ENCODE measurements at regions of chr5 and their contacts with region 1.

Region 1: GRCh38 chr5:148730943-148731861 is 76.9 kb upstream of the HTR4 start:
- DNase-seq: peak; percentile 76 to 80
- H3K4me3 ChIP-seq: no peak overlapping the region
- H3K27ac ChIP-seq: no peak overlapping the region
- H3K4me1 ChIP-seq: peaks cover 0 to 21% (median 10%) of the 10 kb centered on the region in 4 donors
- H3K27me3 ChIP-seq: no peaks in the 10 kb centered on the region
- CTCF ChIP-seq: peak; percentile 83 to 96

Region 2: DNA sequence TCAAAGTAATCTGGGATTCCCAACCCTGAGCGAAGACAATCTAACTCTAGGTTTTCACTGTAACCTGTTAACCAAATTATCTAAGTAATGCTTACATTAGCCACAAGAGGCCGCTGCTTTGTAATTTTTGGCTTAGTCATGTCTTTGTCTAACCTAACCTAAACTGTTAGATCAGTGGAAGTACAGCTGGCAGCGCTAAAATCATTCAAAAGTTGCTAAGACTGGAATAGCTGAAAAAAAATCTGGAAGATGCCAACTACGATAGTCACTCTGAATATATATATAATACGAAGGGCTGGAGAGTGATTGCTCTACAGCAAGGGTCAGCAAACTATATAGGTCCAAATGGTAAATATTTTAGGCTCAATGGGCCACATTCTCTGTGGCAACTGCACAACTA is 287.2 kb before region 1 on chr5:
- intact Hi-C with region 1: loop called (anchors 10 kb)
- DNase-seq: no peak
- H3K4me3 ChIP-seq: no peak overlapping the region
- H3K27ac ChIP-seq: no peak overlapping the region
- H3K4me1 ChIP-seq: peaks cover 0 to 5% (median 0%) of the 10 kb centered on the region in 4 donors
- H3K27me3 ChIP-seq: no peaks in the 10 kb centered on the region
- CTCF ChIP-seq: peak; percentile 69 to 90

Region 3: GRCh38 chr5:148826053-148826738 is 95.0 kb after region 1 on chr5 and contains the start of gene ADRB2:
- intact Hi-C with region 1: loop called (anchors 10 kb)
- DNase-seq: peak; percentile 93 to 98
- H3K4me3 ChIP-seq: peak within 1 kb of the TSS; percentile 58 to 71
- H3K27ac ChIP-seq: peak within 1 kb of the TSS; percentile 74 to 78
- H3K4me1 ChIP-seq: peaks cover 0 to 43% (median 7%) of the 10 kb centered on the region in 4 donors
- H3K27me3 ChIP-seq: no peaks in the 10 kb centered on the region
- CTCF ChIP-seq: no peak

Region 4: DNA sequence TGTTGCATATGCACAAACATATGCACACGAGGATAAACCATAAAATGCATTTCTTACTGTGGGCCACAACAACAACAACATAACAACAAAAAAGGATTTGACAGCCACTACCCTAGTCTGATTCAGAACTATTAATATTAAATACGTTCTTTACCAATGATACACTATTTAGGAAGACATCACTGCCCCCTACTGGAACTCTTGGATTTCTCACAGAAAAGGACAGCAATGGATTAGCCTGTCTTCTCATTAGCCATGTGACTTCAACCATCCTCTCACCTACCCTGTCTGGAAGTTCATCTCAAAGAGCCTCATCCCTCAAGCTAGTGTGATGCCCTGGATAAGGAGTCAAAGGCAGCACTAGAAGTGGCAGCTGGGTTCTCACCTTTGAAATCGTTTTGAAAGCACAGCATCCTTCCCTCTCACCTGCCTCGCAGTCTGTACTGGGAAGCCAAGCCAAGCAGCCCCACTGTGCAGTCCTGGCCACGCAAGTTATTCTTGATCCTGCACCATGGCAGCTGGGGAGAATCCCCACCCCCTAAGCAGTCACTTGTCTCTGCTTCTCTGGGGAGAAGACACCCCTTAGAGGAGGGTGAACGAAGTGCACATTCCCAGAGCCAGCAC is 267.1 kb after region 1 on chr5:
- intact Hi-C with region 1: loop called (anchors 2 kb)
- DNase-seq: no peak
- H3K4me3 ChIP-seq: no peak overlapping the region
- H3K27ac ChIP-seq: no peak overlapping the region
- H3K4me1 ChIP-seq: peaks cover 0 to 13% (median 7%) of the 10 kb centered on the region in 4 donors
- H3K27me3 ChIP-seq: no peaks in the 10 kb centered on the region
- CTCF ChIP-seq: peak; percentile 67 to 81

Region 5: DNA sequence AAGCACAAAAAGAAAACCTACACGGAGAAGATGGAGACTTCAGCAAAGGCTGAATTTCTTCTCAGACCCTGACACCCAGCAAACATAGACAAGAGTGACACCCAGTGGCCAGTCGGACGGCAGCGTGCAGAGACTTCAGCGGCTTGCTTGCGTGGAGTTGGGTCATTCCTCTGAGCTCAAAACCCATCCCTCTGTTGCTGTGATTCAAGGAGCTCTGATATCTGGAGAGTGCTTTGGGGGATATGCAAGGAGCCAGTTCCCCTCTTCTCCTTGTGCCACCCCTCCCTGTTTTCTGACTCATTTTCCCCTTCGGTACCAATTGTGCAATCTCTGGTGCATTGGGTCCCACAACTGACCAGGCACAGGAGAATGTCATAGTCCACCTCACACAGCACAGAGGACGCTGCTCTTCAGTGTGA is 304.2 kb after region 1 on chr5:
- intact Hi-C with region 1: loop called (anchors 10 kb)
- DNase-seq: peak; percentile 72 to 76
- H3K4me3 ChIP-seq: no peak overlapping the region
- H3K27ac ChIP-seq: no peak overlapping the region
- H3K4me1 ChIP-seq: no peaks in the 10 kb centered on the region
- H3K27me3 ChIP-seq: no peaks in the 10 kb centered on the region
- CTCF ChIP-seq: peak; percentile 72 to 73

Region 6: GRCh38 chr5:149114403-149115312 is 383.5 kb after region 1 on chr5:
- intact Hi-C with region 1: loop called (anchors 10 kb)
- DNase-seq: peak in 1 of 2 donors; percentile 48
- H3K4me3 ChIP-seq: no peak overlapping the region
- H3K27ac ChIP-seq: no peak overlapping the region
- H3K4me1 ChIP-seq: no peaks in the 10 kb centered on the region
- H3K27me3 ChIP-seq: peaks cover 0 to 6% of the 10 kb centered on the region in 2 donors
- CTCF ChIP-seq: peak; percentile 54 to 56

Measured in tibial artery (tissue), 4 donors.